ENCODE measurements at regions of chr7 and their contacts with region 1.

Region 1: DNA sequence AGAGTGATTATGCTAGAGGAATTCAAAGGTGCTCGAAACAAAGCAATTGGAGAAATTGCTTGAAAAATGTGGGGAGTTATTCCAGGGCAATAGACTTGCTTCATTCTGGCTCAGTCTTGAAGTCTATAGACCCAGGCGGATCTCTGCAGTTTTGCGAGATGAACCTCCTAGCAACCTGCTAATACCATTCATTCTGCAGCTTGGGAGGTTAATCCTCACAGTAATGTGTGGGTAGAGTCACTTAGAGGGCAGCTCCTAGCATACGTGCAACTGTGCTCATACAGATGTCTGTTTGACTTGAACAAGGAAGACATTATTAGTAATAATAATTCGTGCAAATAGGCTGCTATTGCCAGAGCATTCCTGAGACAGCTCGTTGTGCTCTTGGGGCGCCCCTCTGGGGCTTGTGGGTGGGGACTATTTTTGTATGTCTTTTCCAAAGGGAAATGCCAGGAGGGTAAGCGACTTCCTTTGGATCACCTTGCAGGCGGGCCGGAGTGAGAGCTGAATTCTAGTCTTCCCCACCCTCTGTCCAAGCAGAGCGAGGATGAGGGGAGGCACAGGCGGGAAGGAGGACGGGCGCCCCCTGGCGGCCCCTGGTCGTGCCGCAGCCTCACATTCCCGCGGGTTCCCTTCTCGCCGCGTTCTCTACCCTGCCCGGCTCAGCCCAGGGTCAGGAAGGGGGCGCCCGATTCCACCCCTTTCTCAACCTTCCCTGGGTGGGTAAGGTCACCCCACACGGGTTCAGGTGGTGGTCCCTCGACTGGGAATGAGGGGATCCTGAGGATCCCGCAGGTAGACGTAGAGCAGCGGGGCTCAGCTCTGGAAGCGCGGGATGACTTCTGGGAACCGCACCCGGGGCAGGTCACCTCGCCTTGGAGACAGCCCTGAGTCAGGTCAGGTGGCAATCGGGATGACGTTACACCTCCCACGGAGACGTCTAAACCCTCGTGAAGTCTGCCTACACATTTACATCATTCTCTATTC is 241.5 kb downstream of the PHTF2 start:
- DNase-seq: peak; percentile 23 to 75 (median 57)
- ATAC-seq: peak; percentile 51 to 74
- H3K4me3 ChIP-seq: no peak overlapping the region
- H3K27ac ChIP-seq: no peak overlapping the region
- H3K4me1 ChIP-seq: no peaks in the 10 kb centered on the region
- H3K27me3 ChIP-seq: no peaks in the 10 kb centered on the region

Region 2: GRCh38 chr7:77940647-77941046 is 99.4 kb before region 1 on chr7:
- intact Hi-C with region 1: loop called in 2 of 4 experiments (anchors 2 to 10 kb)
- DNase-seq: no peak
- ATAC-seq: no peak
- H3K4me3 ChIP-seq: no peak overlapping the region
- H3K27ac ChIP-seq: no peak overlapping the region
- H3K4me1 ChIP-seq: no peaks in the 10 kb centered on the region
- H3K27me3 ChIP-seq: no peaks in the 10 kb centered on the region

Region 3: GRCh38 chr7:77967429-77967828 is 72.7 kb before region 1 on chr7:
- intact Hi-C with region 1: no loop called
- DNase-seq: no peak
- ATAC-seq: no peak
- H3K4me3 ChIP-seq: no peak overlapping the region
- H3K27ac ChIP-seq: no peak overlapping the region
- H3K4me1 ChIP-seq: no peaks in the 10 kb centered on the region
- H3K27me3 ChIP-seq: no peaks in the 10 kb centered on the region